ENCODE measurements at regions of chr9 and their contacts with region 1.

Region 1: GRCh38 chr9:35051069-35051967 is 21.1 kb downstream of the VCP start:
- DNase-seq: peak; percentile 28 to 51 (median 36)
- H3K4me3 ChIP-seq: no peak overlapping the region
- H3K4me3 Mint-ChIP-seq: no peak overlapping the region
- H3K27ac ChIP-seq: no peak overlapping the region
- H3K27ac Mint-ChIP-seq: no peak overlapping the region
- H3K4me1 ChIP-seq: no peaks in the 10 kb centered on the region
- H3K4me1 Mint-ChIP-seq: peaks cover 0 to 13% (median 5%) of the 10 kb centered on the region in 4 donors
- H3K27me3 ChIP-seq: no peaks in the 10 kb centered on the region
- H3K27me3 Mint-ChIP-seq: no peaks in the 10 kb centered on the region

Region 2: GRCh38 chr9:35029852-35030251 is 21.5 kb before region 1 on chr9:
- CTCF ChIA-PET with region 1: interaction called, 11 read pairs
- POLR2A ChIA-PET with region 1: no interaction called
- intact Hi-C with region 1: no loop called
- DNase-seq: no peak
- H3K4me3 ChIP-seq: no peak overlapping the region
- H3K4me3 Mint-ChIP-seq: no peak overlapping the region
- H3K27ac ChIP-seq: no peak overlapping the region
- H3K27ac Mint-ChIP-seq: peak overlapping the region in 1 of 7 donors; percentile 31
- H3K4me1 ChIP-seq: peaks cover 6% of the 10 kb centered on the region
- H3K4me1 Mint-ChIP-seq: peaks cover 0 to 10% (median 5%) of the 10 kb centered on the region in 4 donors
- H3K27me3 ChIP-seq: no peaks in the 10 kb centered on the region
- H3K27me3 Mint-ChIP-seq: no peaks in the 10 kb centered on the region